ENCODE measurements at regions of chr17 and their contacts with region 1.

Region 1: DNA sequence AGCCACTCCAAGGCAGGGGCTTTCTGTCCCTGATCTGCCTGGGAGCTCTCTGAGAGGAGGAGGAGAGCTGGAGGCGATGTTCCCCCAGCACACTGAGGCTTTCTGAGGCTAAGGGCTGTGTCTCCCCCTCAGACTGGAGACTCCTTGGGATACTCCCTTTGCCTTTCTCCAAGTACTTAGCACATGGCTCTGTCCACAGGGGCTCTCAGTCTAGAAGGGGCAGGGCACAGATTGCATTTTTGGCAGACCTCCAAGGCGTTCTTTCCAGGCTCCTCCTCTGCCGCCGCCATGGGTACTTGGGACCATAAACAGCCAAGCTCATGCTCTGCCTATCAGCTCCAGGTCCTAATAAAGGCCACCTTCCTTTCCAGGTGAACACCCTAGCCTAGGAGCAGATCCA is 1.8 kb upstream of the GIP start:
- DNase-seq: no peak
- H3K4me3 ChIP-seq: no peak overlapping the region
- H3K27ac ChIP-seq: no peak overlapping the region
- H3K4me1 ChIP-seq: no peaks in the 10 kb centered on the region
- H3K27me3 ChIP-seq: no peaks in the 10 kb centered on the region
- CTCF ChIP-seq: no peak
- EP300 ChIP-seq: no peak
- POLR2A ChIP-seq: no peak

Region 2: DNA sequence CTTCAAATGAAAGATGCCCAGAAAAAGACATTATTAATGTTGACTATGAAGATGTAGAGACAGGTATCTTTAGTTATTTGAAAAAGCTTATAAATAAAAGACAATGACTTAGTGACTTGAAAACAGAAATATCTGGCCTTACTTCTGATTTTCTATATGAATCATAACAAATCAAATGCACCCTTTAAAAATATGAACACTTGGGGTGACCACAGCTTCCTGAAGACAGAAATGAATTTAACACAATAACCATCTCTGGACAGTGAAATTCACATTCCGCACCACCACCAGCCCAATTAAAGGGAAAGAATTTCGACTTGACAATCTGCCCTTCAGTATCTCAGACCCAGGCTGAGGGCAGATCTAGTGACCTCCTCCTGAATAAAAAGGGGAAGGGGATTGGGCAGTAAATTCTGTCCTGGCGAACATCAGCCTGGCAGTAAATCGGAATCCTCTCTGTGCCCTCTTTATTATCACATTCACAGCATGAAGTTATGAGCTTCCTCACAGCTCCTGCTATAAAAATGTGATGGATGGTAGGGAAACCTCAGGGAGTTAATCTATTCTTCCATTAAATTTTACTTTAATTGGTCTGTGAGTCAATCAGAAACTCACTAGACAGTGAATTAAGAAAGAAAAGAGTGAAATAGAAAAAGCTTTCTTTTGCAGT is 731.2 kb before region 1 on chr17:
- intact Hi-C with region 1: loop called in 1 of 4 experiments (anchors 2 kb)
- DNase-seq: no peak
- H3K4me3 ChIP-seq: no peak overlapping the region
- H3K27ac ChIP-seq: no peak overlapping the region
- H3K4me1 ChIP-seq: peaks cover 1% of the 10 kb centered on the region
- H3K27me3 ChIP-seq: no peaks in the 10 kb centered on the region
- CTCF ChIP-seq: no peak
- EP300 ChIP-seq: no peak
- POLR2A ChIP-seq: no peak